Tibial artery (tissue), 4 donors: ENCODE measurements at regions of chr4 and their contacts with region 1.

Region 1: GRCh38 chr4:168847771-168848511 is 162.1 kb downstream of the CBR4 start:
- DNase-seq: peak in 1 of 2 donors; percentile 37
- H3K4me3 ChIP-seq: peak overlapping the region; percentile 4 to 30
- H3K27ac ChIP-seq: peak overlapping the region; percentile 88 to 98
- H3K4me1 ChIP-seq: peaks cover 0 to 99% (median 79%) of the 10 kb centered on the region in 4 donors
- H3K27me3 ChIP-seq: no peaks in the 10 kb centered on the region
- CTCF ChIP-seq: no peak

Region 2: DNA sequence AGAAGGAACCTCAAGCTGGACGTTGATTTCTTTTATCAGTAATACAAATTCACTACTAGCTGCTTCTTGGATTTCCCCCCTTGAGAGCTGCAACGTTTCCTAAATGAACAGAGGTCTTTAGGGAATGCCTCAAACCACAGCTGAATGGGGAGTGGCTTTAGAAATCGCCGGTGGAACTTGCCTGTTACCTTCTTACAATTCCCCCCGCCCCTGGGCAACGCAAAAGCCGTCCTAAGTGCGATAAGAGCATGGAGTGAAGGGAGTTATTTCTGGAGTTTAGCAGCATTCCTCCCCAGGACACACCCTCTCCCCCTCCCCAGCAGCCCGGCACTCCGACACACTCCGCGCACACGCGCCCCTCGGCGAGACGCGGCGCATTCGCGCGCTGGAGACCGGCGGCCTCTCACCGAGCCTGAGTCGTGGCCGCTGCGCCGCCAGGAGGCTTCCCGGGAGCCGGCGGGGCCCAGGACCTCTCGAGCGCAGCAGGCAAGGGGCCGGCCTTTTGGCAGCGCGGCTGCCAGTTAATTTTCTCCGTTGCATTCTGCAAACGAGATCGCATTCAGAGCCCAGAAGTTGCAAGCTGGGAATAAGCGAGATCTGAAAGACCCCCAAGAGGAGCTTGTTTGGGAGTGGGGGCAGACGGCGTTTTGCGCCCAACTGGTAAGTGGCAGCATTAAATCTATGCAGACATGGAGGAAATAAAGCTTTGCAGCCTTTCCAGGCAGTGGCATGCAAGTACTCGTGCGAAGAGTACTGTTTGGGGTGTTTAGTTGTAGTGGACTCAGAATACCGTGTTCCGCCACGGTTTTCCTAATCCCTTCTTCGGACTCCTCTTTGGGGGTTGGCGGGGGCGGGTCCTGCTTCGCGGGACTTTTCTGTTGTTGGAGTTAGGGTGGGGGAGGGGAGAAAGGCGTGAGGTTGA is 216.4 kb before region 1 on chr4:
- intact Hi-C with region 1: loop called (anchors 10 kb)
- DNase-seq: peak; percentile 43 to 77
- H3K4me3 ChIP-seq: peak overlapping the region; percentile 58 to 76
- H3K27ac ChIP-seq: peak overlapping the region; percentile 76 to 79
- H3K4me1 ChIP-seq: peaks cover 0 to 48% (median 38%) of the 10 kb centered on the region in 4 donors
- H3K27me3 ChIP-seq: no peaks in the 10 kb centered on the region
- CTCF ChIP-seq: peak; percentile 53 to 59